ENCODE measurements at regions of chr10 and their contacts with region 1.

Region 1: GRCh38 chr10:18689498-18689897 is 30.3 kb downstream of the ARL5B start:
- DNase-seq: no peak
- ATAC-seq: no peak
- H3K4me3 ChIP-seq: no peak overlapping the region
- H3K4me3 Mint-ChIP-seq: no peak overlapping the region
- H3K27ac ChIP-seq: no peak overlapping the region
- H3K27ac Mint-ChIP-seq: no peak overlapping the region
- H3K4me1 ChIP-seq: no peaks in the 10 kb centered on the region
- H3K4me1 Mint-ChIP-seq: peaks cover 0 to 3% (median 2%) of the 10 kb centered on the region in 3 donors
- H3K27me3 ChIP-seq: peaks cover 0 to 3% of the 10 kb centered on the region in 2 experiments
- H3K27me3 Mint-ChIP-seq: peaks cover 6 to 13% of the 10 kb centered on the region in 2 donors

Region 2: GRCh38 chr10:18523025-18523424 is 166.5 kb before region 1 on chr10:
- CTCF ChIA-PET with region 1: no interaction called
- POLR2A ChIA-PET with region 1: interaction called in 1 of 2 experiments, 17 read pairs
- DNase-seq: no peak
- ATAC-seq: no peak
- H3K4me3 ChIP-seq: no peak overlapping the region
- H3K4me3 Mint-ChIP-seq: no peak overlapping the region
- H3K27ac ChIP-seq: no peak overlapping the region
- H3K27ac Mint-ChIP-seq: no peak overlapping the region
- H3K4me1 ChIP-seq: no peaks in the 10 kb centered on the region
- H3K4me1 Mint-ChIP-seq: no peaks in the 10 kb centered on the region
- H3K27me3 ChIP-seq: no peaks in the 10 kb centered on the region
- H3K27me3 Mint-ChIP-seq: no peaks in the 10 kb centered on the region

Region 3: GRCh38 chr10:18635995-18636394 is 53.5 kb before region 1 on chr10:
- CTCF ChIA-PET with region 1: interaction called in 1 of 2 experiments, 10 read pairs
- POLR2A ChIA-PET with region 1: no interaction called
- DNase-seq: no peak
- ATAC-seq: no peak
- H3K4me3 ChIP-seq: no peak overlapping the region
- H3K4me3 Mint-ChIP-seq: no peak overlapping the region
- H3K27ac ChIP-seq: no peak overlapping the region
- H3K27ac Mint-ChIP-seq: no peak overlapping the region
- H3K4me1 ChIP-seq: no peaks in the 10 kb centered on the region
- H3K4me1 Mint-ChIP-seq: no peaks in the 10 kb centered on the region
- H3K27me3 ChIP-seq: no peaks in the 10 kb centered on the region
- H3K27me3 Mint-ChIP-seq: no peaks in the 10 kb centered on the region

Measured in T-cell (primary cell).